Ascending aorta (tissue), 2 donors: ENCODE measurements at regions of chr11 and their contacts with region 1.

Region 1: GRCh38 chr11:70467201-70468085 is 69.1 kb downstream of the CTTN start:
- DNase-seq: no peak
- H3K4me3 ChIP-seq: no peak overlapping the region
- H3K27ac ChIP-seq: no peak overlapping the region
- H3K4me1 ChIP-seq: no peaks in the 10 kb centered on the region
- H3K27me3 ChIP-seq: no peaks in the 10 kb centered on the region
- CTCF ChIP-seq: peak; percentile 30 to 73 (median 73)

Region 2: DNA sequence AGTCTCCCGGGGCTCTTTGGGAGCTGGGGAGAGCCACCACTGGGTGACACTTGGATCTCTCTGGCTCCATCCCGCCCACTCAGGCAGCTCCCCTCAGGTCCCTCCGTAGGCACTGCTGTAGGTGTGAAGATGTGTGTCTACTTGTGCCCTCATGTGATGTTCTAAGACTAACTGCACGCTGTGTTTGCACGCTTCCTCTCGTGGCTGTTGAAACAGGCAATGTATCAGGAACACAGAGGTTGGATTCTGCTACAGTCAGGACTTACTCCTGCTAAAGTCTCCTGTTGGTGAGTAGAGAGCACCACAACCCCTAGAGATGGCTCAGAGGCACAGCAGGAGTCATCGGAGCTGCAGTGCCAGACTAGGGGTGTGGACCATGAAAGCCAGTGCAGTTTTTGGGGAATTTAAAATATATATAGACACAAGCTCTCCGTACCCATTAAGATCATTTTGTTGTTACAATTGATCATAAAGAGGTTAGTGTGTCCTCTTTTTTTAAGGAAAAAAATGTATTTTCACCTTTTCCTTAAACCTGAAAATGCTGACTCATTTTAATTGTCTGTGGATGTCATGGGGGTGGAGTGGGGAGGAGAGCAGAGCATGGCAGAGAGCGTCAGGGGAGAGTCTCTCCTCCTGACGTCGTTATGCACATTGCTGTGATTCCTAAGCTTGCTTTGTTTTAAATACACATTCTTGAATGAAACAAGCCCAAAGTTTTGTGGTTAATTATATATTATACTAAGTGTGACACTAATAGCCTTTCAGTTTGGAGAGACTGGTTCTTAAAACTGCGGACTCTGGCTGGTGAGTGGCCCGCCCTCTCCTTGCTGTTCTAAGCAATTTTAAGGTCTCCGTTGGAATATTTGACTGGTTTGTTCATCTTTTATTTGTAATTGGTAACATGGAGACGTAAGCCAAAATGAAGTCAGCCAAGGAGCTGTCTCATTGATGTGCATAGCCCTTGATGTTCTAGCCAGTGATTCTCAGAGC is 85.3 kb before region 1 on chr11:
- intact Hi-C with region 1: no loop called
- DNase-seq: peak in 1 of 2 donors; percentile 56
- H3K4me3 ChIP-seq: no peak overlapping the region
- H3K27ac ChIP-seq: peak overlapping the region in 1 of 2 donors; percentile 23
- H3K4me1 ChIP-seq: peaks cover 0 to 3% of the 10 kb centered on the region in 2 donors
- H3K27me3 ChIP-seq: no peaks in the 10 kb centered on the region
- CTCF ChIP-seq: peak in 1 of 3 experiments; percentile 21

Region 3: GRCh38 chr11:70402698-70403097 is 64.7 kb before region 1 on chr11:
- intact Hi-C with region 1: no loop called
- DNase-seq: no peak
- H3K4me3 ChIP-seq: no peak overlapping the region
- H3K27ac ChIP-seq: no peak overlapping the region
- H3K4me1 ChIP-seq: peaks cover 9 to 18% of the 10 kb centered on the region in 2 donors
- H3K27me3 ChIP-seq: no peaks in the 10 kb centered on the region
- CTCF ChIP-seq: no peak

Region 4: DNA sequence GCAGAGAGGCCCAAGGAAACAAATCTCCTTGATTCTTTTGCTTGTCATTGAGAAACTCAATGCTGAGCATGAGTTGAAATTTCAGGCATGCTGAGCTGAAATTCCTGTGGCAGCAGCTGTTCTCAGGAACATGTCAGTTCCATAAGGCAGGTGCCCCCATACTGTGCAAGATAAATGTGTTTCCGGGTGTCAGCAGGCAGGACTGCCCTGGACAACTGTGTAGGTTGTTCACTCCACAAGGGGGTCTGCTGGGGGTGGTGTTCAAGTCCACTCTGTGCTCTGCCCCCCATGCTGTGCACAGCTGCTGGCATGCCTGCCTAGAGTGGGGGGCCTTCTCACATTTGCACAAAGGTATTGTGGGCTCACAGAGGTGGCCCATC is 64.6 kb after region 1 on chr11:
- intact Hi-C with region 1: no loop called
- DNase-seq: no peak
- H3K4me3 ChIP-seq: no peak overlapping the region
- H3K27ac ChIP-seq: no peak overlapping the region
- H3K4me1 ChIP-seq: no peaks in the 10 kb centered on the region
- H3K27me3 ChIP-seq: no peaks in the 10 kb centered on the region
- CTCF ChIP-seq: no peak

Region 5: DNA sequence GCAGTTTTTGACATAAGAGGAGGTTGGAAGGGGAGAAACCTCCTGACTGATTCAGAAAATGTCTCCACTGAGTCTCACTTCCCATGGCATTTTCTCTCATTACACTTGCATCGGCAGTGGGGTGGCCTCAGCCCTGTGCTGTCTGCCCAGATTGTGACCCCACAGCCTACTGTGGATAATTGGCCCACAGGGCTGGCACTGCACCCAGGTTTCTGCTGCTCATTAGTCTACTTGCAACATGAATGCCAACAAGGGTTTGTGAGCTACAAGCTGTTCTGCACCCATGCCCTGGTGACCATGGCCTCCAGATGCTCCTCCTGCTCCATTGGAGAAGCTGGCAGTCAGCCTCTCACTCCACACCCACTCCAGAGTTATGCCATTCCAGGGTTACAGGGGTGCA is 226.9 kb after region 1 on chr11:
- intact Hi-C with region 1: no loop called
- DNase-seq: no peak
- H3K4me3 ChIP-seq: no peak overlapping the region
- H3K27ac ChIP-seq: no peak overlapping the region
- H3K4me1 ChIP-seq: no peaks in the 10 kb centered on the region
- H3K27me3 ChIP-seq: no peaks in the 10 kb centered on the region
- CTCF ChIP-seq: no peak

Region 6: DNA sequence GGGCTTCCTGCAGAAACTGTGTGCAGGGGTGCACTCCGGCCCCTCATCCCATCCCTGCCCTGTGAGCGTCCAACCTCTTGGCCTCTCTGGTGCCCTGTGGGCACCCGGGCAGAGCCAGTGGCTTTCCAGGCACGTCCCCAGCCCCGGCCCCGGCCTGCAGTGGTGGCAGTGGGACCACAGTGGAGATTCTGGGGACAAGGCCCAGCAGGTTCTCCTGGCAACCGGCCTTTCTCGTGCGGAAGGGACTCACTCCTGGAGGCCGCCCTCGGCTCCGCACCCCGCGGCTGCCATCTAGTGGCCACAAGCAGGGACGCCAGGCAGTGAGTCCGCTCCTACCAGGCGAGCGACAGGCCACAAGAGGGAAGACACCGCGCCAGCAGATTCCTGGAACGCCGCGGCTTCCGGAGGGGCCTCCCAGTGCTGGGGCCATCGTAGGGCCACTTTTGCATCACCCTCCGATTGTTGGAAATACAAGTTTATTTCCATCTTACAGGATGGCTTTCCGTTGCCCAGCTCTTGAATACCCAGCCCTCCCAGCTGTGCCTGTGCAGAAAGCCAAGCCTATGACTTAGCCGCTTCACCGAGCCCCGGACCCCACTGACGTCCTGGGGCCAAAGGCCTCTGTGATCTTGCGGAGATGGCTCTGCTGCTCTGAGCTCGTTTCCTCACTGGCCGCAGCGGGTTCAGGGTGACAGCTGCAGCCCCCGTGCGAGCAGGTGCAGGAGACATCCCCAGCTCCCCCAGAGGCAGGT is 288.1 kb after region 1 on chr11:
- intact Hi-C with region 1: loop called (anchors 10 kb)
- DNase-seq: peak in 1 of 2 donors; percentile 15
- H3K4me3 ChIP-seq: no peak overlapping the region
- H3K27ac ChIP-seq: no peak overlapping the region
- H3K4me1 ChIP-seq: no peaks in the 10 kb centered on the region
- H3K27me3 ChIP-seq: no peaks in the 10 kb centered on the region
- CTCF ChIP-seq: peak; percentile 57 to 78 (median 74)

Region 7: GRCh38 chr11:71372693-71373657 is 905.5 kb after region 1 on chr11:
- intact Hi-C with region 1: loop called (anchors 5 kb)
- DNase-seq: no peak
- H3K4me3 ChIP-seq: no peak overlapping the region
- H3K27ac ChIP-seq: no peak overlapping the region
- H3K4me1 ChIP-seq: no peaks in the 10 kb centered on the region
- H3K27me3 ChIP-seq: no peaks in the 10 kb centered on the region
- CTCF ChIP-seq: peak in 2 of 3 experiments; percentile 38 to 47

Region 8: DNA sequence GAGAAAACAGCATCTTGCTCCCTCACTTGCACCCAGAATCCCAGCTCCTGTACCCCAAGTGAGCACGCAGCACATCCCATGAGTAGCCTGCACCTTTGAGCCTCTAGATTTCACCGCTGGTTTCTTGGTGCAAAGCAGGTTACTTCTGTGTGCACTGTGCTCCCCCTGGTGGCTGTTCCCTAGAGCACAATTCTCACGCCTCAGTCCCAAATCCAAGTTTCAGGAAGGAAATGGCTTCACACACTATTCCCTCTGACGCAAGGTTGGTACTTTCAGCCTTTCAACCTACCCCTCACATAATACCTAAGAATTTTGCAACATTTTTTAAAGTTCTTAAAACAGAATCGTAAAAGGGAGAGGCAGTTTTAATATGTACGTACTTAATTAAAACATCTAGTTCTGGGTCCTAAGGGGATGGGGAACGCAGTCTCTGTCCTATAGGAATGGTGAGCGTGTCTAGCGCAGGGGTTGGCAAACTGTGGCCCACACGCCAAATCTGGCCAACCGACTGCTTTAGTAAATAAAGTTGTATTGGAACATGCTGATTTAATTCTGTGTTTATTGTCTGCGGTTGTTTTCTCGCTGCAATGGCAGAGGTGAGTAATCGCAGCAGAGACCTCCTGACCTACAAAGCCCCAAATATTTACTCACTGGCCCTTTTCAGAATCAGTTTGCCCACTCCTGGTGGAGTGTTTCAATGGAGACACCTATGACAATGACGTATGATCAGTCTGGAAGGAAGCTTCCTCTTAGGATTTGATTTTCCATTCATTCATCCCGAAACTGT is 953.2 kb after region 1 on chr11:
- intact Hi-C with region 1: loop called (anchors 5 kb)
- DNase-seq: no peak
- H3K4me3 ChIP-seq: no peak overlapping the region
- H3K27ac ChIP-seq: no peak overlapping the region
- H3K4me1 ChIP-seq: no peaks in the 10 kb centered on the region
- H3K27me3 ChIP-seq: no peaks in the 10 kb centered on the region
- CTCF ChIP-seq: peak in 2 of 3 experiments; percentile 27 to 47